Activated B cell treated with CpG ODN at 0.5 μM for 24 hours (primary cell): ENCODE measurements at regions of chr6 and their contacts with region 1.

Region 1: DNA sequence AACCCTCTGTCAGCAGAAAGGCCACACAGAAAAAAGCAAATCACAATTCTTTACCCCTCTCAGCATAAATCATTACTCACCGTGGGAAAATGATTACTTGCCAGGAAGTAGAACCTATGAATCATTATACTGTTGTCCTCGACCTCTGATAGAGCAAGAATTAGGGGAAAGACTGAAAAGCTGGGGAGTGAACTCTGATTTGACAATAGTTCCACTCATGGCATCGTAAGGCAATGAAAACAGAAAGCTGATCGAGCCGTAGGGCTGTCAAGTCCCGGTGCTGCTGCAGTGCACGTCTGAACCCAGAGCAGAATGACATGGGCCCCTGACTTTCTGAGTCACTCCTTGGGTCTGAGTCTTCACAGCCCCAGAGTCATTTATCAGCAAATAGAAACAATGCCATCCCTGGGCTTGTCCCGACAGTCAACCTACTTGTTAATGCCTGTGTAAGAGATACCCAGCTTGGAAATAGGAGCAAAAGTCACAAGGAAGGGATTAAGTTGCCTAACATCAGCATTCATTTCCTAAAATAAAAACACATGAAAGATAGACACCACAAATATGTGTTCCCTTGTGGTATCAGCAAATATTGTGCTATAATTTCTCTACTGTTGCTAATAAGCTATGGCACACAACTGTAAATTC is 224.8 kb upstream of the MARCKS start:
- DNase-seq: no peak
- ATAC-seq: peak; percentile 32
- H3K4me3 Mint-ChIP-seq: peak overlapping the region; percentile 87
- H3K27ac Mint-ChIP-seq: peak overlapping the region; percentile 99
- H3K4me1 Mint-ChIP-seq: peaks cover 88% of the 10 kb centered on the region
- H3K27me3 Mint-ChIP-seq: no peaks in the 10 kb centered on the region
- CTCF ChIP-seq: no peak

Region 2: GRCh38 chr6:112311950-112312547 is 1320.3 kb before region 1 on chr6:
- CTCF ChIA-PET with region 1: no interaction called
- POLR2A ChIA-PET with region 1: no interaction called
- intact Hi-C with region 1: loop called (anchors 5 kb)
- DNase-seq: no peak
- ATAC-seq: no peak
- H3K4me3 Mint-ChIP-seq: no peak overlapping the region
- H3K27ac Mint-ChIP-seq: no peak overlapping the region
- H3K4me1 Mint-ChIP-seq: peaks cover 12% of the 10 kb centered on the region
- H3K27me3 Mint-ChIP-seq: no peaks in the 10 kb centered on the region
- CTCF ChIP-seq: no peak

Region 3: DNA sequence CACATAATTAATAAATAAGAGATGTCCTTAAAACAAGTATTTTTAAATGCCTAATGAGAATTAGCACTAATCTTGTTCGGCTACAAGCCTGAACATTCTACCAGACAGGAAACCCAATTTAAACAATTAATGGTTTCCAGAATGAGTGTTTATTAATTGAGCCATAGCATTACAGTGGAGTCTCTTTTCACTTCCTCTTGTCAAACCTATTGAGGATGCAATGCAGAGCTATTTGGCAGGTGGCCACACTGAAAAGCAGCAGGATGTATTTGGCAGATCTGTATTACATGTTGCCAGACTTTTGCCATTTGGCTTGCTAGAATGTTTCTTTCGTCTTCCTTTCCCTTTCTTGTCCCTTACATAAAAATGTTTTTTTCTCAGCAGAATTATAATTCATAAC is 250.4 kb before region 1 on chr6:
- CTCF ChIA-PET with region 1: no interaction called
- POLR2A ChIA-PET with region 1: no interaction called
- intact Hi-C with region 1: loop called (anchors 5 kb)
- DNase-seq: no peak
- ATAC-seq: peak; percentile 75
- H3K4me3 Mint-ChIP-seq: no peak overlapping the region
- H3K27ac Mint-ChIP-seq: no peak overlapping the region
- H3K4me1 Mint-ChIP-seq: peaks cover 7% of the 10 kb centered on the region
- H3K27me3 Mint-ChIP-seq: peaks cover 10% of the 10 kb centered on the region
- CTCF ChIP-seq: no peak

Region 4: DNA sequence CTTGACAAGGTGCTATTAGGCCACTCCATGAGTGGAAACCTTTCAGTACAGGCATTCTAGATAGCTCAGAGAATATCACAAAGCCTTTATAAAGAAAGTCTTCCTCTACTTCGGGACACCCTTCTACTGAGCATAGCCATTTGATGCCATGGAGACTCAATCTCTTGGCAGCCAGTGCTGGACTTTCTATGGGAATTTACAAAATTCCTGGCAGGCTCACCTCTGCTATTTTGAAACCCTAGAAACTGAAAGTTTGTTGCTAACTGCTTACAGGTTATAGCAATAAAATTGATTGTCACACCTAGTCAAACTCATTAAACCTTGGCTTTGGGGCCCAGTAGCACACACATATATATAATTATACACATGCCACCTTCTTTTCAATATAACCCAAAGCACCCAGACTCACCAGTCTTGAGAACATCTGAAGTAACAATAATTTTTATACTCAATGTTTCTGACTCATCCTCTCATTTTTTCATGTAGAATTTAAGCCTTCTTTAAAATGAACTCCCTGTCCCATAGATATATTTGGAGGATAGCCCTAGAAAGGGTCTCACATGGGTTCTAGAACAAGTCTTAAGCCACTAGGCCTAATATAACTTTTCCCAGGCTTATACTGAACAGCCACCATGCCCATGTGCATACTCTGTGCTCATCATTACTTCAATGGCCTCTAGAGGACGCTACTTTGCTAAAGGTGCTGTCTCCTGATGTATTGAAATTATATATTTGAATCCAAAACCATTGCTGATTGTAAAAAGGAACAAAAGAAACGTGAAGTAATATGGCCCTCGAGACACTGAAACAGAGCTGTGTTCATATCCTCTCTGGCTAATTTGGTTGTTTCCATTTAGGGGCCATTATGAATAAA is 143.3 kb before region 1 on chr6:
- CTCF ChIA-PET with region 1: no interaction called
- POLR2A ChIA-PET with region 1: no interaction called
- intact Hi-C with region 1: no loop called
- DNase-seq: no peak
- ATAC-seq: no peak
- H3K4me3 Mint-ChIP-seq: no peak overlapping the region
- H3K27ac Mint-ChIP-seq: no peak overlapping the region
- H3K4me1 Mint-ChIP-seq: no peaks in the 10 kb centered on the region
- H3K27me3 Mint-ChIP-seq: no peaks in the 10 kb centered on the region
- CTCF ChIP-seq: no peak

Region 5: DNA sequence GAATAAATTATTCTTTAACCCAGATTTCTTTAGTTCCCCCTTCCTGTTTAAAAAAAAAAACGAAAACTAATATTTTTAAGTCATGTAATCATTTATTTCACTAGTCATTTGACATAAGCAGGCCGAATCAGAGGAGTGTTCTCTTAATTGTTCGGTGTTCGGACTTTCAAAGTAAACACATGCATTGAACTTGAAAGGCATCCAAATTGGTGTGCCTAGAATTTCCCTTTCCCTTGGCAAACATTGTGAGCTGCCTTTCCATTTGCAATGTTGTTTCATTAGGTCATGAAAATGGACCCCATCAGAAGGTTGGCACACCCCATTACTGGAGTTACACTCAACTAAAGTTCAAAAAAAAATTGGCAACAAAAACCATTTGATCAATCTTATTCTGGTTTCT is 58.2 kb before region 1 on chr6:
- CTCF ChIA-PET with region 1: no interaction called
- POLR2A ChIA-PET with region 1: no interaction called
- intact Hi-C with region 1: no loop called
- DNase-seq: no peak
- ATAC-seq: no peak
- H3K4me3 Mint-ChIP-seq: no peak overlapping the region
- H3K27ac Mint-ChIP-seq: no peak overlapping the region
- H3K4me1 Mint-ChIP-seq: peaks cover 6% of the 10 kb centered on the region
- H3K27me3 Mint-ChIP-seq: no peaks in the 10 kb centered on the region
- CTCF ChIP-seq: no peak

Region 6: DNA sequence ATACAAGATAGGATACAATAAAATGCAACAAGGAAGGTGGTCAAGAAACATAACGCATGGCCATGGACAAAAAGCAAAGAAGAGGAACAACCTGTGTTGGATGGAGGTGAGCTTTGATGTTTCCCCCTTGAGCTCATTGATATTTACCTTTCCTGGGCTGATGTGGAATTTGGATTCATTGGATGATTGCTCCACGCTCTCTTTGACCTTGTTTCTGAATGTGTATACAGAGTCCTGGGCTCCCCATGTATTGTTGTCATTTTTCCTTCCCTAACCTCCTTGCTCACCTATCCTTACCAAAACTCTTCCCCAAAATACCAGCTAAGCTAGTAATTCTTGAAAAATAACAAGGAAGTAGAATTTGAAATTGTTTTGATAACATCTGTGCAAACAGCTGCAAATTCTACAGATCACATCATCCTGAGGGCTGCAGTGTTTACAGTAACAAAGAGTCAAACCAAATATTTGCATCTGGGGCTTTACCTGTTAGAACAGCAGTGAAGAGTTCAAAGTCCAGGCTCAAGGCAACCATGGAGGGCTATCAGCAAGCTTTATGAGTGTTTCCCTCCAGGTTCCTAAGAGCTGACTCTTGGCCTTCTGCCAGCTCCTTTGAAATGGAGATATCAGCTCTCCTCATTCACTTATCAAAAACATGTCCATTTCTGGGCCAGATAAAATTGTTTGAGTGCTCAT is 10.5 kb after region 1 on chr6:
- CTCF ChIA-PET with region 1: no interaction called
- POLR2A ChIA-PET with region 1: interaction called, 18 read pairs
- intact Hi-C with region 1: loop called (anchors 1 kb)
- DNase-seq: no peak
- ATAC-seq: peak; percentile 66
- H3K4me3 Mint-ChIP-seq: peak overlapping the region; percentile 2
- H3K27ac Mint-ChIP-seq: peak overlapping the region; percentile 54
- H3K4me1 Mint-ChIP-seq: peaks cover 53% of the 10 kb centered on the region
- H3K27me3 Mint-ChIP-seq: no peaks in the 10 kb centered on the region
- CTCF ChIP-seq: no peak

Region 7: GRCh38 chr6:113690281-113691259 is 58.2 kb after region 1 on chr6:
- CTCF ChIA-PET with region 1: no interaction called
- POLR2A ChIA-PET with region 1: no interaction called
- intact Hi-C with region 1: loop called (anchors 1 kb)
- DNase-seq: no peak
- ATAC-seq: peak; percentile 71
- H3K4me3 Mint-ChIP-seq: peak overlapping the region; percentile 19
- H3K27ac Mint-ChIP-seq: peak overlapping the region; percentile 46
- H3K4me1 Mint-ChIP-seq: peaks cover 23% of the 10 kb centered on the region
- H3K27me3 Mint-ChIP-seq: no peaks in the 10 kb centered on the region
- CTCF ChIP-seq: no peak

Region 8: GRCh38 chr6:113970805-113971676 is 338.7 kb after region 1 on chr6 and contains the start of gene HDAC2:
- CTCF ChIA-PET with region 1: no interaction called
- POLR2A ChIA-PET with region 1: no interaction called
- intact Hi-C with region 1: loop called (anchors 5 kb)
- DNase-seq: peak; percentile 88
- ATAC-seq: peak; percentile 83
- H3K4me3 Mint-ChIP-seq: peak within 1 kb of the TSS; percentile 99
- H3K27ac Mint-ChIP-seq: peak within 1 kb of the TSS; percentile 98
- H3K4me1 Mint-ChIP-seq: peaks cover 36% of the 10 kb centered on the region
- H3K27me3 Mint-ChIP-seq: no peaks in the 10 kb centered on the region
- CTCF ChIP-seq: no peak
- total RNA-seq, gene HDAC2: 60.0 and 68.4 TPM in 2 replicates